CD4-positive, alpha-beta T cell (primary cell): ENCODE measurements at regions of chr12 and their contacts with region 1.

Region 1: GRCh38 chr12:89542912-89543592 is 17.2 kb upstream of the POC1B start:
- DNase-seq: peak; percentile 33 to 84 (median 50)
- ATAC-seq: peak; percentile 88
- H3K4me3 ChIP-seq: no peak overlapping the region
- H3K4me3 Mint-ChIP-seq: no peak overlapping the region
- H3K27ac ChIP-seq: no peak overlapping the region
- H3K27ac Mint-ChIP-seq: no peak overlapping the region
- H3K4me1 ChIP-seq: peaks cover 10% of the 10 kb centered on the region
- H3K4me1 Mint-ChIP-seq: peaks cover 7% of the 10 kb centered on the region
- H3K27me3 ChIP-seq: no peaks in the 10 kb centered on the region
- H3K27me3 Mint-ChIP-seq: no peaks in the 10 kb centered on the region
- CTCF ChIP-seq: peak; percentile 94

Region 2: DNA sequence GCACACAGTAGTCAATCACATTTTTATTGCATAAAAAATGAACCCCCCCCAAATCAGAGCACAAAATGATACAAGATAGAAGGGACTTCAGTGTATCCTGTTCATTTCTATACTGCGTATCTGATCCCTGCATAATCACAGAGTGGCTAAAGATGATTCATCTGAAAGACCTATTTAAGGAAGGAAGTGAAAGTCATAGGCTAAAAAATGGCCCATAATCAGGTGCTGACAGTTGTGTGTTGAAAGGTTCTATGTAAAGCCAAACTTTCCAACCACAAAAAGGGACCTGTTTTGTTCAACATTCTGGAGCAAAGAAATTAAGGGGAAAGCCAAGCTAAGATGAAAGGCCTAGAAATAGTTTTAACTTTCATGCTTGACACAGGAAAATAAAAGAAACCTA is 313.4 kb after region 1 on chr12:
- CTCF ChIA-PET with region 1: no interaction called
- POLR2A ChIA-PET with region 1: no interaction called
- intact Hi-C with region 1: loop called (anchors 2 to 5 kb)
- DNase-seq: peak in 3 of 14 experiments; percentile 32 to 64 (median 58)
- ATAC-seq: peak; percentile 61
- H3K4me3 ChIP-seq: no peak overlapping the region
- H3K4me3 Mint-ChIP-seq: no peak overlapping the region
- H3K27ac ChIP-seq: no peak overlapping the region
- H3K27ac Mint-ChIP-seq: peak overlapping the region; percentile 29
- H3K4me1 ChIP-seq: peaks cover 20% of the 10 kb centered on the region
- H3K4me1 Mint-ChIP-seq: peaks cover 48% of the 10 kb centered on the region
- H3K27me3 ChIP-seq: no peaks in the 10 kb centered on the region
- H3K27me3 Mint-ChIP-seq: no peaks in the 10 kb centered on the region
- CTCF ChIP-seq: no peak

Region 3: GRCh38 chr12:90013409-90013808 is 470.4 kb after region 1 on chr12:
- CTCF ChIA-PET with region 1: interaction called, 4 read pairs
- POLR2A ChIA-PET with region 1: no interaction called
- intact Hi-C with region 1: loop called (anchors 5 kb)
- DNase-seq: peak in 4 of 14 experiments; percentile 12 to 58 (median 44)
- ATAC-seq: peak; percentile 46
- H3K4me3 ChIP-seq: no peak overlapping the region
- H3K4me3 Mint-ChIP-seq: no peak overlapping the region
- H3K27ac ChIP-seq: no peak overlapping the region
- H3K27ac Mint-ChIP-seq: no peak overlapping the region
- H3K4me1 ChIP-seq: no peaks in the 10 kb centered on the region
- H3K4me1 Mint-ChIP-seq: peaks cover 9% of the 10 kb centered on the region
- H3K27me3 ChIP-seq: no peaks in the 10 kb centered on the region
- H3K27me3 Mint-ChIP-seq: no peaks in the 10 kb centered on the region
- CTCF ChIP-seq: peak; percentile 24

Region 4: DNA sequence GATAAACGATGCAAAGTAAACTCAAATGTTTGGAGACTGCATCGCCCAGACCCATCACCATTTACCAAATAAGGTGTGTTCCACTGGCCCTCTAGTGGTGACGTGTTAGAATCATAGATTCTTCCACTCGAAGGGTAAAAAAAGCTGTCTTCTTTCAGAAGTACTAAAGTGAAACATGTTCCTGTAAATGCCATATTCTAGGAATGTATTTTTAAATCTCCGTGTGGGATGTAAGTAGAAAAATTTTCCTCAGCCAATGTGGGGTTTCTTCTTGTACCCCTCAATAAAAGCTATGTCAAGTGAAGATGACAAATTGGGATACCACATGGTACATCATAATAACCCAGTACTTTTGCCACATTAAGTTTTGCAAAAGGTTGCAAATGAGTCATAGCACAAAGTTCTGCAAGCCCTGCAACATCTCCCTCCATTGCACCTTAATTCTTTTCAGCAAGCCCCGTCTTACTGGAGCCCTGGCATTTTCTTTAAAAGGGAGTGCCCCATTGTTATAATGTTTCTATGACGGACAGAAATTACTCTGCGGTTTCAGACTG is 1311.2 kb after region 1 on chr12:
- CTCF ChIA-PET with region 1: interaction called, 3 read pairs
- POLR2A ChIA-PET with region 1: no interaction called
- intact Hi-C with region 1: loop called (anchors 2 to 5 kb)
- DNase-seq: peak in 3 of 14 experiments; percentile 18 to 36 (median 26)
- ATAC-seq: peak; percentile 49
- H3K4me3 ChIP-seq: no peak overlapping the region
- H3K4me3 Mint-ChIP-seq: no peak overlapping the region
- H3K27ac ChIP-seq: no peak overlapping the region
- H3K27ac Mint-ChIP-seq: no peak overlapping the region
- H3K4me1 ChIP-seq: no peaks in the 10 kb centered on the region
- H3K4me1 Mint-ChIP-seq: no peaks in the 10 kb centered on the region
- H3K27me3 ChIP-seq: no peaks in the 10 kb centered on the region
- H3K27me3 Mint-ChIP-seq: no peaks in the 10 kb centered on the region
- CTCF ChIP-seq: peak; percentile 61

Region 5: GRCh38 chr12:90870971-90871725 is 1328.1 kb after region 1 on chr12:
- CTCF ChIA-PET with region 1: no interaction called
- POLR2A ChIA-PET with region 1: no interaction called
- intact Hi-C with region 1: no loop called
- DNase-seq: no peak
- ATAC-seq: no peak
- H3K4me3 ChIP-seq: no peak overlapping the region
- H3K4me3 Mint-ChIP-seq: no peak overlapping the region
- H3K27ac ChIP-seq: no peak overlapping the region
- H3K27ac Mint-ChIP-seq: no peak overlapping the region
- H3K4me1 ChIP-seq: no peaks in the 10 kb centered on the region
- H3K4me1 Mint-ChIP-seq: no peaks in the 10 kb centered on the region
- H3K27me3 ChIP-seq: no peaks in the 10 kb centered on the region
- H3K27me3 Mint-ChIP-seq: no peaks in the 10 kb centered on the region
- CTCF ChIP-seq: no peak

Region 6: DNA sequence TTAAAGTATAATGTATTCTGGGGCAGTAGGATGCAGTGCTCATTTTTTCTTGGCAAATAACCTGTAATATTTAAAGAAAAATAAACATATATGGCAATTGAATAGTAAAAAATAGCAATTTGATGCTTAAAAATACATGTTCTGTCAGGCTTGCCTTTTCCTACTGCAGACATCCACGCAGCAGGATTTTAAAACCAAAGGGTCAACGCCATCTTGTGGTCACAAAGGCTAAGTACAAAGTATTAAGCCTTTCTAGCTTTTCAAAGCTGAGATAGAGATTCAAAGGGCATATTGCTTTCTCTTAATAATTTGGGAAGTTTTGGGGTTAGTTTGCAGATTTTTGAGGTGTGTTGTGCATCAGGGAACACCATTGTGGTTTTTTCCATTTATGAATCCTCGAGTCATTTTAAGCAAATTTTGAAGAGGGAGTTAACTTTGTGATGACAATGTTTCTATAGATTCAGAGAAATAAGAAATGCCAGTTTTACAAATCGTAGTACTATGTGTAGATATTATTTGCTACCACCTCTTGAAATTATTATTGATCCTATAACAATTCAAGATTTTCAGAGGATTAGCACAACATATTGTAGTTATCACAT is 1416.6 kb after region 1 on chr12:
- CTCF ChIA-PET with region 1: no interaction called
- POLR2A ChIA-PET with region 1: no interaction called
- intact Hi-C with region 1: loop called (anchors 1 to 2 kb)
- DNase-seq: peak in 5 of 14 experiments; percentile 5 to 54 (median 34)
- ATAC-seq: no peak
- H3K4me3 ChIP-seq: no peak overlapping the region
- H3K4me3 Mint-ChIP-seq: no peak overlapping the region
- H3K27ac ChIP-seq: no peak overlapping the region
- H3K27ac Mint-ChIP-seq: no peak overlapping the region
- H3K4me1 ChIP-seq: no peaks in the 10 kb centered on the region
- H3K4me1 Mint-ChIP-seq: no peaks in the 10 kb centered on the region
- H3K27me3 ChIP-seq: no peaks in the 10 kb centered on the region
- H3K27me3 Mint-ChIP-seq: peaks cover 4% of the 10 kb centered on the region
- CTCF ChIP-seq: peak; percentile 82